ENCODE measurements at regions of chr5 and their contacts with region 1.

Region 1: GRCh38 chr5:77356740-77357139 is 135.4 kb downstream of the WDR41 start:
- DNase-seq: peak in 1 of 2 donors; percentile 68
- H3K4me3 ChIP-seq: no peak overlapping the region
- H3K27ac ChIP-seq: peak overlapping the region; percentile 63 to 70
- H3K4me1 ChIP-seq: peaks cover 2 to 29% of the 10 kb centered on the region in 2 donors
- H3K27me3 ChIP-seq: no peaks in the 10 kb centered on the region
- CTCF ChIP-seq: no peak

Region 2: GRCh38 chr5:77400645-77401044 is 43.9 kb after region 1 on chr5:
- intact Hi-C with region 1: loop called (anchors 5 kb)
- DNase-seq: no peak
- H3K4me3 ChIP-seq: no peak overlapping the region
- H3K27ac ChIP-seq: peak overlapping the region in 1 of 2 donors; percentile 31
- H3K4me1 ChIP-seq: peaks cover 0 to 14% of the 10 kb centered on the region in 2 donors
- H3K27me3 ChIP-seq: no peaks in the 10 kb centered on the region
- CTCF ChIP-seq: no peak

Region 3: GRCh38 chr5:77418601-77419591 is 62.2 kb after region 1 on chr5:
- intact Hi-C with region 1: loop called (anchors 5 kb)
- DNase-seq: peak; percentile 53 to 93
- H3K4me3 ChIP-seq: no peak overlapping the region
- H3K27ac ChIP-seq: peak overlapping the region; percentile 97
- H3K4me1 ChIP-seq: peaks cover 18 to 34% of the 10 kb centered on the region in 2 donors
- H3K27me3 ChIP-seq: no peaks in the 10 kb centered on the region
- CTCF ChIP-seq: no peak

Measured in ascending aorta (tissue), 2 donors.